OCI-LY7 (cell line): ENCODE measurements at regions of chr7 and their contacts with region 1.

Region 1: DNA sequence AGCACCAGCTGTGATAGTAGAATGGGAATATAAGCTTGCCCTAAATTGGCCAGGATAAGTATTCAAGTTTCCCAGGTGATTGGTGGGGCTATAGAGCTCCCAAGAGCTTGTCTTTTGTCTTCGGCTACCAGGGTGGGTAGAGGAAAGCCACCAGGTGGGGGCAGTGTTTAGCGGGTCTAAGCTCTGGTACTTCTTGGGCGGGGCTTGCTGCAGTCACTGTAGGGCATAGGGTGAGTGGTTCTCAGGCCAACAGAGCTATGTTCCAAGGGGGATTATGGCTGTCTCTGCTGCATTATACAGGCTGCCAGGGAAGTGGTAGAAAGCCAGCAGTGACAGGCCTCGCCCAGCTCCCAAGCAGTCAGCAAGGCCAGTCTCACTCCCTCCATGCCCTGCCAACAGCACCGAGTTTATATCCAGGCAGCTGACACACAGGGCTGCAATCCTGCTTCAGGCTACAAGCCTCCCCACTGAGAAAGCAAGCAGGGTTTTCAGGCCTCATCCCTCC is 110.7 kb downstream of the ZNF467 start:
- DNase-seq: peak; percentile 72
- H3K4me3 ChIP-seq: no peak overlapping the region
- H3K27ac ChIP-seq: no peak overlapping the region
- H3K4me1 ChIP-seq: no peaks in the 10 kb centered on the region
- CTCF ChIP-seq: peak; percentile 82

Region 2: GRCh38 chr7:149742075-149742701 is 79.5 kb after region 1 on chr7:
- CTCF ChIA-PET with region 1: interaction called, 8 read pairs
- POLR2A ChIA-PET with region 1: interaction called, 4 read pairs
- intact Hi-C with region 1: loop called (anchors 1 kb)
- DNase-seq: peak; percentile 74
- H3K4me3 ChIP-seq: peak overlapping the region; percentile 49
- H3K27ac ChIP-seq: no peak overlapping the region
- H3K4me1 ChIP-seq: peaks cover 3% of the 10 kb centered on the region
- CTCF ChIP-seq: peak; percentile 93

Region 3: GRCh38 chr7:149799397-149800171 is 136.9 kb after region 1 on chr7:
- CTCF ChIA-PET with region 1: no interaction called
- POLR2A ChIA-PET with region 1: no interaction called
- intact Hi-C with region 1: loop called (anchors 1 kb)
- DNase-seq: peak; percentile 63
- H3K4me3 ChIP-seq: no peak overlapping the region
- H3K27ac ChIP-seq: no peak overlapping the region
- H3K4me1 ChIP-seq: no peaks in the 10 kb centered on the region
- CTCF ChIP-seq: peak; percentile 82